ENCODE measurements at regions of chr2 and their contacts with region 1.

Region 1: DNA sequence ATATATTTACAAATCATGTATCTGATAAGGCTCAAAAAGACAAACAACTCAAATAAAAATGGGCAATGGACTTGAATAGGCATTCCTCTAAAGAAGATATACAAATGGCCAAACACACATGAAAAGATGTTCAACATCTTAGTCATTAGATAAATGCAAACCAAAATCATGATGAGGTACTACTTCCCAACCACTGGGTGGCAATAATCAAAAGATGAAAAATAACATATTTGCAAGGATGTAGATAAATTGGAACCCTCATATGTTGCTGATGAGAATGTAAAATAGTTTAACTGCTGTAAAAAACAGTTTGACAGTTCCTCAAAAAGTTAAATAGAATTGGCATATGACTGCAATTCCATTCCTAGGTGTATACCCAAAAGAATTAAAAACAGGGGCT is 132.3 kb downstream of the TTC32 start:
- DNase-seq: no peak
- H3K4me3 ChIP-seq: no peak overlapping the region
- H3K27ac ChIP-seq: no peak overlapping the region
- H3K4me1 ChIP-seq: peaks cover 0 to 15% (median 0%) of the 10 kb centered on the region in 4 donors
- H3K27me3 ChIP-seq: no peaks in the 10 kb centered on the region
- CTCF ChIP-seq: no peak
- EP300 ChIP-seq: no peak
- POLR2A ChIP-seq: no peak

Region 2: GRCh38 chr2:19568809-19569791 is 200.4 kb before region 1 on chr2:
- intact Hi-C with region 1: no loop called
- DNase-seq: no peak
- H3K4me3 ChIP-seq: no peak overlapping the region
- H3K27ac ChIP-seq: no peak overlapping the region
- H3K4me1 ChIP-seq: peaks cover 0 to 3% (median 0%) of the 10 kb centered on the region in 4 donors
- H3K27me3 ChIP-seq: no peaks in the 10 kb centered on the region
- CTCF ChIP-seq: no peak
- EP300 ChIP-seq: no peak
- POLR2A ChIP-seq: no peak

Region 3: GRCh38 chr2:19835781-19836281 is 66.3 kb after region 1 on chr2:
- intact Hi-C with region 1: loop called (anchors 10 kb)
- DNase-seq: peak; percentile 88
- H3K4me3 ChIP-seq: no peak overlapping the region
- H3K27ac ChIP-seq: peak overlapping the region in 3 of 4 donors; percentile 30 to 68 (median 65)
- H3K4me1 ChIP-seq: peaks cover 0 to 24% (median 22%) of the 10 kb centered on the region in 4 donors
- H3K27me3 ChIP-seq: no peaks in the 10 kb centered on the region
- CTCF ChIP-seq: no peak
- EP300 ChIP-seq: peak; percentile 53 to 94 (median 88)
- POLR2A ChIP-seq: no peak

Measured in sigmoid colon (tissue), 7 donors.